HepG2 (cell line): ENCODE measurements at regions of chr6 and their contacts with region 1.

Region 1: GRCh38 chr6:37868447-37868825 is 48.9 kb downstream of the ZFAND3 start:
- DNase-seq: no peak
- ATAC-seq: no peak
- H3K4me3 ChIP-seq: no peak overlapping the region
- H3K27ac ChIP-seq: no peak overlapping the region
- H3K4me1 ChIP-seq: no peaks in the 10 kb centered on the region
- H3K27me3 ChIP-seq: no peaks in the 10 kb centered on the region
- CTCF ChIP-seq: no peak
- EP300 ChIP-seq: no peak
- POLR2A ChIP-seq: no peak
- RAD21 ChIP-seq: no peak

Region 2: GRCh38 chr6:37882724-37883413 is 14.4 kb after region 1 on chr6:
- CTCF ChIA-PET with region 1: no interaction called
- POLR2A ChIA-PET with region 1: no interaction called
- in situ Hi-C with region 1: no loop called
- intact Hi-C with region 1: loop called (anchors 1 kb)
- DNase-seq: peak; percentile 84
- ATAC-seq: peak; percentile 89
- H3K4me3 ChIP-seq: no peak overlapping the region
- H3K27ac ChIP-seq: peak overlapping the region; percentile 46
- H3K4me1 ChIP-seq: peaks cover 56% of the 10 kb centered on the region
- H3K27me3 ChIP-seq: no peaks in the 10 kb centered on the region
- CTCF ChIP-seq: no peak
- EP300 ChIP-seq: no peak
- POLR2A ChIP-seq: no peak
- RAD21 ChIP-seq: no peak

Region 3: GRCh38 chr6:37919417-37920157 is 51.2 kb after region 1 on chr6:
- CTCF ChIA-PET with region 1: no interaction called
- POLR2A ChIA-PET with region 1: no interaction called
- in situ Hi-C with region 1: no loop called
- intact Hi-C with region 1: no loop called
- DNase-seq: no peak
- ATAC-seq: no peak
- H3K4me3 ChIP-seq: no peak overlapping the region
- H3K27ac ChIP-seq: no peak overlapping the region
- H3K4me1 ChIP-seq: peaks cover 32% of the 10 kb centered on the region
- H3K27me3 ChIP-seq: no peaks in the 10 kb centered on the region
- CTCF ChIP-seq: no peak
- EP300 ChIP-seq: no peak
- POLR2A ChIP-seq: no peak
- RAD21 ChIP-seq: no peak

Region 4: GRCh38 chr6:38370653-38371601 is 502.5 kb after region 1 on chr6:
- CTCF ChIA-PET with region 1: no interaction called
- POLR2A ChIA-PET with region 1: no interaction called
- in situ Hi-C with region 1: no loop called
- intact Hi-C with region 1: no loop called
- DNase-seq: no peak
- ATAC-seq: no peak; the same call in 2 of the 3 replicates
- H3K4me3 ChIP-seq: no peak overlapping the region
- H3K27ac ChIP-seq: no peak overlapping the region
- H3K4me1 ChIP-seq: no peaks in the 10 kb centered on the region
- H3K27me3 ChIP-seq: no peaks in the 10 kb centered on the region
- CTCF ChIP-seq: no peak
- EP300 ChIP-seq: no peak
- POLR2A ChIP-seq: no peak
- RAD21 ChIP-seq: no peak